ENCODE measurements at regions of chr19 and their contacts with region 1.

Region 1: GRCh38 chr19:42268704-42269477 is at the start of gene CIC:
- DNase-seq: peak; percentile 98 to 100 (median 99)
- ATAC-seq: peak; percentile 74
- H3K4me3 ChIP-seq: peak within 1 kb of the TSS; percentile 70
- H3K4me3 Mint-ChIP-seq: peak within 1 kb of the TSS; percentile 92
- H3K27ac ChIP-seq: peak within 1 kb of the TSS; percentile 98 to 99
- H3K27ac Mint-ChIP-seq: no peak within 1 kb of the TSS
- H3K4me1 ChIP-seq: peaks cover 37% of the 10 kb centered on the region
- H3K4me1 Mint-ChIP-seq: peaks cover 22% of the 10 kb centered on the region
- H3K27me3 ChIP-seq: no peaks in the 10 kb centered on the region
- H3K27me3 Mint-ChIP-seq: no peaks in the 10 kb centered on the region
- CTCF ChIP-seq: no peak
- total RNA-seq, gene CIC: 114 to 119 TPM

Region 2: GRCh38 chr19:42254989-42255765 is 13.7 kb before region 1 on chr19 and contains the start of gene ERF:
- CTCF ChIA-PET with region 1: no interaction called
- POLR2A ChIA-PET with region 1: interaction called, 6 read pairs
- intact Hi-C with region 1: loop called (anchors 1 kb)
- DNase-seq: peak; percentile 89 to 98 (median 92)
- ATAC-seq: peak; percentile 75
- H3K4me3 ChIP-seq: peak within 1 kb of the TSS; percentile 100
- H3K4me3 Mint-ChIP-seq: peak within 1 kb of the TSS; percentile 93
- H3K27ac ChIP-seq: peak within 1 kb of the TSS; percentile 97 to 98
- H3K27ac Mint-ChIP-seq: peak within 1 kb of the TSS; percentile 85
- H3K4me1 ChIP-seq: peaks cover 43% of the 10 kb centered on the region
- H3K4me1 Mint-ChIP-seq: peaks cover 28% of the 10 kb centered on the region
- H3K27me3 ChIP-seq: no peaks in the 10 kb centered on the region
- H3K27me3 Mint-ChIP-seq: no peaks in the 10 kb centered on the region
- CTCF ChIP-seq: no peak
- total RNA-seq, gene ERF: 105 to 113 TPM

Region 3: GRCh38 chr19:42401365-42402303 is 132.7 kb after region 1 on chr19:
- CTCF ChIA-PET with region 1: no interaction called
- POLR2A ChIA-PET with region 1: no interaction called
- intact Hi-C with region 1: no loop called
- DNase-seq: peak; percentile 63 to 90 (median 70)
- ATAC-seq: peak; percentile 68
- H3K4me3 ChIP-seq: peak overlapping the region; percentile 56
- H3K4me3 Mint-ChIP-seq: peak overlapping the region; percentile 90
- H3K27ac ChIP-seq: peak overlapping the region in 1 of 2 donors; percentile 40
- H3K27ac Mint-ChIP-seq: peak overlapping the region; percentile 75
- H3K4me1 ChIP-seq: peaks cover 37% of the 10 kb centered on the region
- H3K4me1 Mint-ChIP-seq: peaks cover 46% of the 10 kb centered on the region
- H3K27me3 ChIP-seq: no peaks in the 10 kb centered on the region
- H3K27me3 Mint-ChIP-seq: no peaks in the 10 kb centered on the region
- CTCF ChIP-seq: peak; percentile 77

Region 4: DNA sequence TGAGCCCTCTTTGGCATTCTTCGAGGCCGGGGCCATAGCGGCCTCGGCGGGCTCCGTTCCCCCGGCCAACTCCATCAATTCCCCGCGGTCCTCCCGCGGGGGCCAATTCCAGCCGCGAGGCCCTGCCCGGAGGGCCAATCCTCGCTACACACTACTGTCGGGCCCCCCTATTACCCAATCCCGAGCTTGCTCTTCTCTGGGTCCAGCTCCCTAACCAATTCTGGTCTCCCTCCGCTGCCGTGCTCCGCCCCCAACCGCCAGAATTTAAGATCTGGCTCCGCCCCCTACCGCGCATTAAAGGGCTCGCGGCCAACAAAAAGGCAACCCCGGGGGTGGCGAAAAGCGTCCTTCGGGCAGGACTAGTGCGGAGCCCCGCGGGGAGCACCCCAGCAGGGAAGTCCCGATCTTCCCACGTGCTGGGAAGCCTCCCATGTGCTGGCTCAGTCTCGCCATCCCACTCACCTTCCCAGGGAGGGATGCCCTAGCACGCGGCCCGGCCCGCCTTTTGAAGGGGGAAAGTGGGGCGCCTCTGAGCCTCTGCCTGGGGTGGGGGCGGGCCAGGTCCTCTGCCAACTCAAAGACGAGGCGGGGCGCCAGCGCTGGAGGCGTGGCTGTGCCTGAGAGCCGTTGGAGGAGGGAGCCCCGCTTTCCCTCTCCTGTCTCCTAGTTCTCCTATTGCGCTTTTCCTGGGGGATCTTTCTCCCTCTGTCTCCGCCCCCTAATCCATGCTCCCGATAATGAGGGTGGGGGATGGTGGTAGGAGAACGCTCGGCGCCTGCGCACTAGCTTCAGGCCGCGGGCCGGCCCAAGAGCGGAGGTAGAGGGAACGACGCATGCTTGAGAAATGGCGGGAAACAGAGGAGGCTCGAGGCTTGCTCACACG is 154.8 kb after region 1 on chr19:
- CTCF ChIA-PET with region 1: no interaction called
- POLR2A ChIA-PET with region 1: no interaction called
- intact Hi-C with region 1: no loop called
- DNase-seq: peak; percentile 88 to 96 (median 92)
- ATAC-seq: peak; percentile 84
- H3K4me3 ChIP-seq: peak overlapping the region; percentile 80
- H3K4me3 Mint-ChIP-seq: peak overlapping the region; percentile 92
- H3K27ac ChIP-seq: peak overlapping the region; percentile 63 to 80
- H3K27ac Mint-ChIP-seq: peak overlapping the region; percentile 78
- H3K4me1 ChIP-seq: peaks cover 46% of the 10 kb centered on the region
- H3K4me1 Mint-ChIP-seq: peaks cover 49% of the 10 kb centered on the region
- H3K27me3 ChIP-seq: no peaks in the 10 kb centered on the region
- H3K27me3 Mint-ChIP-seq: no peaks in the 10 kb centered on the region
- CTCF ChIP-seq: no peak

Measured in CD4-positive, alpha-beta T cell (primary cell).